Sigmoid colon (tissue), 7 donors: ENCODE measurements at regions of chr4 and their contacts with region 1.

Region 1: DNA sequence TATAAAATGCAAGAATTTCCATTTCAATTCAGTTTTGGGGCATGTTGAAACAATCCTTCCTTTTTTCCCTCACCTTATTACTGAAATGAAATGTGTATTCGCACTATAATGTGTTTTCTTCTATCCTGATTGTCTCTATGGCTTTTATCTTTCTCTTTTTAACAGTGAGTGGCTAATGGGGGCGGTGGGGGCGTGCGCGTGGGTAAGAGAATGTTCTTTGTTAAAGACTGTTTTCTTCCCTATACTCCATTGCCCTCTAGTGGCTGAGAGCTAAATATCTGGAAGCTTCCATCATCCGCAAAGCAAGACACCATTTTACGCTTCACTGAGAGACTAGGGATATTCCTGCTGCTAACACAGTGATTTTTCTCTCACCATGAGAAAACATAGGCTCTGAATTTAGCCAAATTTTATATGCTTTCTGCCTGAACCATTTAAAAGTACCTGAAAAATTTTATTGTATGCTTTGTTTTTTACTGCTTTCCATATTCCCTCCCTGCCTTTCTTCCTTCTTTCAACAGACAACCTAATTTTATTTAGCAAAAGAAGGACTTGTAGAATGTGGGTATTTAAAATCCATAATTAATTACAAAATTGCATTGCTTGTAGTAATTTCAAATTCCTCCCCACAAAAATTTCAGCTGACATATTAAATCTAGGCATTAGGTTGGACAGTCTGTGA is 194.0 kb downstream of the GASK1B start:
- DNase-seq: no peak
- H3K4me3 ChIP-seq: no peak overlapping the region
- H3K27ac ChIP-seq: no peak overlapping the region
- H3K4me1 ChIP-seq: no peaks in the 10 kb centered on the region
- H3K27me3 ChIP-seq: no peaks in the 10 kb centered on the region
- CTCF ChIP-seq: peak; percentile 63 to 90 (median 80)
- EP300 ChIP-seq: no peak
- POLR2A ChIP-seq: no peak

Region 2: GRCh38 chr4:157220371-157220881 is 758.4 kb before region 1 on chr4 and contains the start of gene GRIA2:
- intact Hi-C with region 1: loop called (anchors 10 kb)
- DNase-seq: no peak
- H3K4me3 ChIP-seq: peak within 1 kb of the TSS in 3 of 4 donors; percentile 11 to 35 (median 34)
- H3K27ac ChIP-seq: no peak within 1 kb of the TSS
- H3K4me1 ChIP-seq: peaks cover 0 to 18% (median 13%) of the 10 kb centered on the region in 4 donors
- H3K27me3 ChIP-seq: peaks cover 13 to 63% (median 42%) of the 10 kb centered on the region in 3 donors
- CTCF ChIP-seq: no peak
- EP300 ChIP-seq: no peak
- POLR2A ChIP-seq: no peak
- total RNA-seq, gene GRIA2: 0.54 to 0.71 (median 0.61) TPM

Region 3: DNA sequence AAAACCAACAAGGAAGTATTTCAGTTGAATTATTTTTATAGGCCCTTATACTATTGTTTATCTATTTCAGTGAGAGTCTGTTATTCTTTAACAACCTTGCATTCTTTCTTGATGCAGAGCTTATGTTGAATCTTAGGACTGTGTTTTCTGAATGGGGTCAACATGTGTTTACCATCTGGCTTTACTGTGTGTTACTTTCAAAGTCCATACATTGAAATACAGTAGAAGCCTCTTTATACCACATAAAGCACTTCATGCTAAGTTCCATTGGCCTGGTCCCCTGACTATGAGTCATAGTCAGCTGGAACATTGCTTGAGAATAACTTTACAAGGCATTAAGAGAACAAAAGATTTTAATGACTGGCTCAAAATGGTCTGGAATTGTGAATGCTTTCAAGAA is 41.4 kb after region 1 on chr4:
- intact Hi-C with region 1: no loop called
- DNase-seq: peak; percentile 80
- H3K4me3 ChIP-seq: no peak overlapping the region
- H3K27ac ChIP-seq: peak overlapping the region; percentile 68 to 84 (median 74)
- H3K4me1 ChIP-seq: peaks cover 0 to 51% (median 36%) of the 10 kb centered on the region in 4 donors
- H3K27me3 ChIP-seq: no peaks in the 10 kb centered on the region
- CTCF ChIP-seq: no peak
- EP300 ChIP-seq: peak; percentile 68 to 85 (median 73)
- POLR2A ChIP-seq: no peak

Region 4: DNA sequence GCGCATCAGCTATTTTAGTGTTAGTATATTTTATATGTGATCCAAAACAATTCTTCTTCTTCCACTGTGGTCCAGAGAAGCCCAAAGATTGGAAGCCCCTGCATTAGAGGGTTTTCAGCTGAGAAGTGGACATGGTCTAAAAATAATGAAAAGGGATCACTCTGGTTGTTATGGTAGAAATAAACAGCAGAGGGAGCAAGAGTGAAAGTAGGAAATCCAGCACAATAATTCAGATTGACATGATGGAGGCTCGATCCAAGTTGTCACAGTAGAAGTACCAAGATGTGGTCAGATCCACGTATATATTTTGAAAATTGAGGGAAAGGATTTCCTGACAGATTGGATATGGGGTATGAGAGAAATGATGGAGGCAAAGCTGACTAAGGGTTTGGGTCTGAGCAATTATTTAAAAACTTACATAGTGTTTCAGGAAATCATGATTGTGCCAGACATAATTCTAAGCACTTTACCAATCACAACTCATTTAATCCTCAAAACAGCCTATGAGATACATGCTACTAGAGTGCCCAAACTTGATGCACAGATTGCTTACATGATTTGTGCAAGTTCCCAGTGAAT is 214.4 kb after region 1 on chr4:
- intact Hi-C with region 1: no loop called
- DNase-seq: no peak
- H3K4me3 ChIP-seq: no peak overlapping the region
- H3K27ac ChIP-seq: no peak overlapping the region
- H3K4me1 ChIP-seq: no peaks in the 10 kb centered on the region
- H3K27me3 ChIP-seq: no peaks in the 10 kb centered on the region
- CTCF ChIP-seq: peak in 3 of 4 experiments; percentile 35 to 48 (median 43)
- EP300 ChIP-seq: no peak
- POLR2A ChIP-seq: no peak